Right ventricle myocardium inferior (tissue), 1 donor: ENCODE measurements at regions of chr15 and their contacts with region 1.

Region 1: DNA sequence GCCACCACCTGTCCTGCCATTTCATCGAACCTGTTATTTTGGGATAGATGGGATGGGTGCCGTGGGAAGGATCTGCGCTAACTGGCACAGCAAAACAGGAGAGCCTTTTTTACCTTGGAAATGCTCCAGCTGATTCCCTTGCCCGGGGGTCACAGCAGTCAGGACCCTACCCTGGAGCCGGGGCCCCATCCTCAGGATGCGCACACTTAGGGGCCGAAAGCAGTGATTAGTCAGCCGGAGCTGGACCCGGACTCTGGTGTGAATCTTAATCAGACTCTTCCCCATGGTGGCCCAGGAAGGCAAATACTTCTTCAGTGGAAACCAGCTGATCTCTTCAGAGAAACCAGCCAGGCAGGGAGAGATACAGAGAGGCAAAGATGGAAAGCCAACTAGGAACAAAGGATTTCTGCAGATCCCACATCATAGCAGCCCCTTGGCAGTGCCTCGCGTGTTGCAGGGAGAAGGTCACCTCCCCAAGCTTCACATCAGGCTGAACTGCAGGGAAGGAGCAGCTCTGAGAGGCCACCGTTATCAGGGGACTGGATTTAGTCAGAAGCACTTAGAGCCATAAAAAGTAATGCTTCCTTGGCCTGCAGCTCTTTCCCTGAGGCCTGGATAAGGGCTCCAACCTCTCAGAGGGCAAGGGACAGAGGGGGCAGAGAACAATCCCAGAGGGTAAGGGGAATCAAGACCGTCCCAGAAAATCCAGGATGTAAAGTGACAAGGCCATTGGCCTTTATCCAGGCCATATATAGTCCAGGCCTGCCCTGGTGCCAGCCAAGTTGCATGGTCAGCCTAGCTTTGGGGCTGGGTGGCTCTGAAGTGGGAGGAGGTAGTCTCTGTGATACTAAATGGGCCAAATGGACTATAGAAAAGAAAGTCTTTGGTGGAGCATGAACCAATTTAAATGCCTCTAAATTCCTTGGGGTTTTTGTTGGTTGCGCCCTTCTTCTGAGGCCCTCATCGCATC is 52.9 kb downstream of the WDR76 start:
- DNase-seq: no peak
- ATAC-seq: peak; percentile 85

Region 2: DNA sequence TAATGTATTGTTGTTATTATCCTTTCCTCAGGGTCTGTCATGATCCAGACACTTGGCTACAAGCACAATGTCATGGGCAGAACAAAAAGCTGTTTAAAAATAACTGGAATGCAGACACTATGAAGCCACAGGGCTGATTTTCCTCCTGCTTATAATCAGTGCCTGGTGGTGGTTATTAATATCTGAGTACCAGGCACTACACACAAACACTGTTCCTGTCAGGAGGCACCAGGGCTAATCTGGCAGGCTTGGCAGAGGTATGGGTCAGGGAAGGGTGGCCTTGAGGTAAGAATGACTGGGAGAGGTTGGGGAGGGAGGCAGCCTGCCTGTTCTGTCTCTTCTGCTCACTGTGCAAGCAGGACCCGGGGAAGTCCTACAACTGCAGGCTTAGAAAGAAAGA is 14.3 kb after region 1 on chr15:
- intact Hi-C with region 1: loop called (anchors 2 kb)
- DNase-seq: no peak
- ATAC-seq: peak; percentile 94

Region 3: DNA sequence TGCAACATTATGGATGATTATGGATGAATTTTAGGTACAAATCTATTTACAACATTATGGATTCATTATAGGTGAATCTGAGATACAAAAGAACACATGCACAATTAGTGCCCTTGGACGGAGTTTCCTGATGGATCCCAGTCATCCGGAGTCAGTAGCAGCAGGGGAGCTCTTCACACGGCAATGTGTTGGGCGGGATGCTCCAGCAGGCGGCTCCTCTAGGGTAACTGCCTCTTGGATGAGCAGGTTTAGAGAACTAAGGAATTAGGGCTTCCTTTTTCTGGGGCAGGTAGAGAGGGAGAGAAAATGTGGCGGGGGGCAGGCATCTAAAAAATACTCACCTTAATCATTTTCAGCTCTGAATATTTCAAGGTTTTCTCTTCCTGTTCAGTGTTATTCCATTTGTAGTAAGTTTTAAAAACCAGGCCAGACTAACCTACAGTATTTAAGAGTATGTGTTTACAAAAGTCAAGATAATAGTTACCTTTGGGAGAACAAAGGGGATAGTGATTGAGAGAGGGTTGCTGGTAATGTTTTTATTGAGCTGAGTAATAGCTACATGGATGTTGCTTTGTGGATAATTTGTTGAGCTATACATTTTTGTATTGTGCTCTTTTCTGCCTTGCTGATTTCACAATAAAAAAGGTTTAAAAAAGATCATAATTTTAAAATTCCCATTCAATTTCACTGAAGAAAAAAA is 381.5 kb after region 1 on chr15:
- intact Hi-C with region 1: no loop called
- DNase-seq: no peak
- ATAC-seq: no peak